ENCODE measurements at regions of chr1 and their contacts with region 1.

Region 1: GRCh38 chr1:184805667-184806295 is 51.1 kb upstream of the EDEM3 start:
- DNase-seq: peak; percentile 89
- H3K4me3 ChIP-seq: no peak overlapping the region
- H3K27ac ChIP-seq: no peak overlapping the region
- H3K4me1 ChIP-seq: peaks cover 16% of the 10 kb centered on the region
- H3K27me3 ChIP-seq: no peaks in the 10 kb centered on the region

Region 2: DNA sequence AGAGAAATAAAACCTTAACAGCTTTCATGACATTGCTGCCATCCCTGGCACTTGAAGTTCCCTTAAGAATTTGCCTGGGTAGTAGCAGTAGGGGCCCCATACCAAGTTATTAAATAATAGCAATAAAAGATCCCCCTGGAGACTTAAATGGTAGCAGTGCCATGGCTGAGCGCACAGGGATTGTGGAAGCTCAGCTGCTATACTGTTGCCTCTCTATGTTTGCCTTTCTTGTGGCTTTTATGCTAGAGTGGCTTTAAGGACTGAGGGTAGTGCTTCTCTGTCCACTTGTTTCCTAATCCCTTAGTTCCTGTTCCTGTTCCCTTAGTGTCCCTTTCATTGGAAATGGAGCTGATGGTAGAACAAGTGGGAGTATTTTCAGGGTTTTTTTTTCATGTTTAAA is 1257.7 kb before region 1 on chr1:
- in situ Hi-C with region 1: no loop called
- DNase-seq: no peak
- H3K4me3 ChIP-seq: no peak overlapping the region
- H3K27ac ChIP-seq: no peak overlapping the region
- H3K4me1 ChIP-seq: no peaks in the 10 kb centered on the region
- H3K27me3 ChIP-seq: no peaks in the 10 kb centered on the region

Region 3: GRCh38 chr1:184672013-184672726 is 133.6 kb before region 1 on chr1:
- in situ Hi-C with region 1: no loop called
- DNase-seq: peak; percentile 6
- H3K4me3 ChIP-seq: no peak overlapping the region
- H3K27ac ChIP-seq: no peak overlapping the region
- H3K4me1 ChIP-seq: no peaks in the 10 kb centered on the region
- H3K27me3 ChIP-seq: peaks cover 10% of the 10 kb centered on the region; the same call in 1 of the 2 replicates

Region 4: GRCh38 chr1:184982002-184982954 is 176.5 kb after region 1 on chr1:
- in situ Hi-C with region 1: loop called (anchors 5 kb)
- DNase-seq: peak; percentile 84
- H3K4me3 ChIP-seq: no peak overlapping the region
- H3K27ac ChIP-seq: no peak overlapping the region
- H3K4me1 ChIP-seq: no peaks in the 10 kb centered on the region
- H3K27me3 ChIP-seq: no peaks in the 10 kb centered on the region

Region 5: DNA sequence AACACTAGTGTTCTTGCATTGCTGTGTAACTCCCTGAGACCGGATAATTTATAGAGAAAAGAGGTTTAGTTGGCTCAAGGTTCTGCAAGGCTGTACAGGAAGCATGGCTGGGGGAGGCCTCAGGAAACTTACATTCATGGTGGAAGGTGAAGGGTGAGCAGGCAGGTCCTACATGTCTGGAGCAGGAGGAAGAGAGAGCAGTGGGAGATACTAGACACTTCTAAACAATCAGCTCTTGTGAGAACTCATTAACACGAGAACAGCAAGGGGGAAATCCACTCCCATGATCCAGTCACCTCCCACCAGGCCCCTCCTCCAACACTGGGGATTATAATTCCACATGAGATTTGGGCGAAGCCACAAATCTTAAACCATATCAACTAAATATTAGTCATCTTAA is 269.7 kb after region 1 on chr1:
- in situ Hi-C with region 1: no loop called
- DNase-seq: no peak
- H3K4me3 ChIP-seq: no peak overlapping the region
- H3K27ac ChIP-seq: no peak overlapping the region
- H3K4me1 ChIP-seq: peaks cover 15% of the 10 kb centered on the region; the same call in 1 of the 2 replicates
- H3K27me3 ChIP-seq: no peaks in the 10 kb centered on the region

Region 6: GRCh38 chr1:185156854-185157598 is 351.2 kb after region 1 on chr1 and contains the starts of genes SWT1 and TRMT1L:
- in situ Hi-C with region 1: loop called (anchors 25 kb)
- DNase-seq: peak; percentile 100
- H3K4me3 ChIP-seq: peak within 1 kb of the TSS; percentile 89
- H3K27ac ChIP-seq: peak within 1 kb of the TSS; percentile 96
- H3K4me1 ChIP-seq: peaks cover 22% of the 10 kb centered on the region
- H3K27me3 ChIP-seq: no peaks in the 10 kb centered on the region
- total RNA-seq, gene SWT1: 1.0 and 2.8 TPM in 2 replicates
- total RNA-seq, gene TRMT1L: 5.1 and 13.2 TPM in 2 replicates

Region 7: DNA sequence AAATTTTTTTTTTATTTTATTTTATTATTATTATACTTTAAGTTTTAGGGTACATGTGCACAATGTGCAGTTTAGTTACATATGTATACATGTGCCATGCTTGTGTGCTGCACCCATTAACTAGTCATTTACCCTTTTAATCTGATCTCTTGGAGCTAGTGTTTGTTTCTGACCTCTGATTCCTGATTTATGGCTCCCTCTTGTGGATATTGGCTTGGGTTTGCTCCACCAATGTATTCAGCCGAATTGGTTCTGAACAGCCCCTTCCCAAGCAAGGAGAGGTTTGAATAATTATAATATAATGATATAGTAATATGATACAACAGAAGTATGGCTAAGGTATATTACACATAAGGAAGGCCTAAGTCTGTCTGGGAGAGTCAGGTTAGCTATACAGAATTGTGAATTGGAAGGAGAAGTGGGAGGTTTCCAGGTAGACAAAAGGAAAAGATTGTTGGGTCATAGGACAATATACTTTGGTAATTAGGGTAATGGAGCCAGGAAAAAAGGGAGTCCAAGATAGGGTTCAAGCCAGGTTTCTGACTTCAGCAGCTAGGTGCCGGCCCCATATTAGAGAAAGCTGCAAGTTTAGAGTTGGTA is 875.4 kb after region 1 on chr1:
- in situ Hi-C with region 1: loop called (anchors 25 kb)
- DNase-seq: peak; percentile 56
- H3K4me3 ChIP-seq: no peak overlapping the region
- H3K27ac ChIP-seq: no peak overlapping the region
- H3K4me1 ChIP-seq: no peaks in the 10 kb centered on the region
- H3K27me3 ChIP-seq: no peaks in the 10 kb centered on the region